HEK293 (cell line): ENCODE measurements at regions of chr19 and their contacts with region 1.

Region 1: DNA sequence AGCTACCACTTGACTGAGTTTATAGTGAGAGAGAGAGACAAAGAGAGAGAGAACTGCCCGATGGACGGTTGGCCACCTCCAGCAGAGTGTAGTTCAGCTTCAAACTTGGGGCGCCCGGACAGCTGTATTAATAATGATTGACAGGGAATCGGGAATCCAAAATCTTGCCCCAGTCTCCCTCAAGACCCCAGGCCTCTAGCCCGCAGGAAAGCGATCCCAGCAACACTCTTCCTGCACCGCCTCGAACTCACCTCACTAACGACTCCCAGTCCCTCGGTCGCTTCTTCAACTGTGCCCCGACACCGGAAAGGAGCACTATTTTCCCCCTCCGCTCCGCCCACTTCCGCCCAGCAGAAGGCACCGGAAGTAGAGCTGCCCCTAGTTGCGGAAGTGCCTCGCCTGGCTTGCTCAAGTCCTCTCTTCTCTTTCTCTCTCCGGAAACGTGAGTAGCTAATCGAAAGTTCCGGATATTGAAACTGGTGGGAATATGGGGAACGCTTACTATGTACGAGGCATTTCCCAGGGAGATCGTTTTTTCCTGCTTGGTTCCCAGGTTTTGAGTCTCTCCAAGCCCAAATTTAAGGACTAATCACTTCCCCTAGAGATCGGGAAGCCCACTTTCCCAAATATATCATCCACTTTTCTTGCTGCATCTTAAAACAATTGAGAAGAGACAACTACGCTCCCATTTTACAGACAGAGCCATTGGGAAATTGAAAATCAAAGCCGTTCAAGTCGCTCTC is at the start of gene NOSIP:
- H3K4me3 ChIP-seq: peak within 1 kb of the TSS; percentile 67
- H3K27ac ChIP-seq: peak within 1 kb of the TSS; percentile 58
- H3K4me1 ChIP-seq: peaks cover 9% of the 10 kb centered on the region
- CTCF ChIP-seq: no peak

Region 2: DNA sequence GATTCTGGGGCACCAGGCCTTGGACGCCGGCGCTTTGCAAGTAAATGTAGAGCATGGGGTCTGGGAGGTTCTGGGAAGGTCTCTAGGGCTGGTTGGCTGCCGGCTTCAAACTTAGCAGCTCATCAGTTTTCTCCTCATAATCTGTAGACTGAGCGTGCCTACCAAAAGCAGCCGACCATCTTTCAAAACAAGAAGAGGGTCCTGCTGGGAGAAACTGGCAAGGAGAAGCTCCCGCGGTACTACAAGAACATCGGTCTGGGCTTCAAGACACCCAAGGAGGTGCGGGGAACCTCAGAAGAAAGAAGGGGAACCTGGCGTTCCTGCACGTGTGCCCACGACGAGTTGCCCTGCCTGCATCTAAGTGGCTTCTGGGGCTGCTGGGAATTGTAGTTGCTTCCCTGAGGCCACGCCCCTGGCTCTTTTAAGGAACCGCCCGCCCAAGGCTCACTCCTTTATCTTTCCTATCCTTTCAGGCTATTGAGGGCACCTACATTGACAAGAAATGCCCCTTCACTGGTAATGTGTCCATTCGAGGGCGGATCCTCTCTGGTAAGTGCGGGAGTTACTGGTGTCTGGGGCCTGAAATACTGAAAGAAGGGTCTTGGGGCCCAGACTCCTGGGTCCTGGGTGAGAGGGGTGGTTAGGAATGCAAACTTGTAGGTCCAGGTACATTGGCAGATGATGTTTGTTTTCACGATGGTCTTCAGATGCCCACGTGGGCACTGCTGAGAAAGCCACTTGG is 83.2 kb before region 1 on chr19:
- CTCF ChIA-PET with region 1: no interaction called
- POLR2A ChIA-PET with region 1: interaction called, 18 read pairs
- H3K4me3 ChIP-seq: peak overlapping the region; percentile 89
- H3K27ac ChIP-seq: peak overlapping the region; percentile 87
- H3K4me1 ChIP-seq: peaks cover 7% of the 10 kb centered on the region
- CTCF ChIP-seq: no peak

Region 3: DNA sequence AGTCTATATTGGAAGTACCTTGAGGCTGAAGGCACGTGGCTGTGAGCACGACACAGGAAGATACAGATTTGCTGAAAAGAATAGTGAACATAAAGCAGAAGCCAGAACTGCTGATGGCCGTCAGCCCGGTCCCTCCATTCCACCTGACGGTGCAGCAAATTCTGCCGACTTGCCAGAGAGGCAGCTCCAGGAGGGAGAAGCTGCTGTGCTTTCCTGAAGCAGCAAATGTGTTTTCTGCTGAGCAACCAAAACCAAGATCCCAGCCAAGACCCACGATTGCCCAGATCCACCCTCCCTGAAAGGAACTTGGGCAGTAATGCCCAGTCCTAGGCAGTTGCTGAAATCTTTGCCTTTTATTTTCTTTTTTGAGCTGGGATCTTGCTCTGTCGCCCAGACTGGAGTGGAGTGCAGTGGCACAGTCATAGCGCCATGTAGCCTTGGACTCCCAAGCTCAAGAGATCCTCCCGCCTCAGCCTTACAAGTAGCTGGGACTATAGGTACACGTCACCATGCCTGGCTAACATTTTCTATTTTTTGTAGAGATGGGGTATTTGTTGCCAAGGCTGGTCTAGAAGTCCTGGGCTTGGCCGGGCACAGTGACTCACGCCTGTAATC is 59.6 kb before region 1 on chr19:
- CTCF ChIA-PET with region 1: no interaction called
- POLR2A ChIA-PET with region 1: no interaction called
- H3K4me3 ChIP-seq: no peak overlapping the region
- H3K27ac ChIP-seq: no peak overlapping the region
- H3K4me1 ChIP-seq: no peaks in the 10 kb centered on the region
- CTCF ChIP-seq: no peak

Region 4: GRCh38 chr19:49858031-49858991 is 277.9 kb after region 1 on chr19:
- CTCF ChIA-PET with region 1: no interaction called
- POLR2A ChIA-PET with region 1: no interaction called
- H3K4me3 ChIP-seq: no peak overlapping the region
- H3K27ac ChIP-seq: peak overlapping the region; percentile 53
- H3K4me1 ChIP-seq: peaks cover 15% of the 10 kb centered on the region
- CTCF ChIP-seq: peak; percentile 48